SK-N-SH (cell line): ENCODE measurements at regions of chr3 and their contacts with region 1.

Region 1: DNA sequence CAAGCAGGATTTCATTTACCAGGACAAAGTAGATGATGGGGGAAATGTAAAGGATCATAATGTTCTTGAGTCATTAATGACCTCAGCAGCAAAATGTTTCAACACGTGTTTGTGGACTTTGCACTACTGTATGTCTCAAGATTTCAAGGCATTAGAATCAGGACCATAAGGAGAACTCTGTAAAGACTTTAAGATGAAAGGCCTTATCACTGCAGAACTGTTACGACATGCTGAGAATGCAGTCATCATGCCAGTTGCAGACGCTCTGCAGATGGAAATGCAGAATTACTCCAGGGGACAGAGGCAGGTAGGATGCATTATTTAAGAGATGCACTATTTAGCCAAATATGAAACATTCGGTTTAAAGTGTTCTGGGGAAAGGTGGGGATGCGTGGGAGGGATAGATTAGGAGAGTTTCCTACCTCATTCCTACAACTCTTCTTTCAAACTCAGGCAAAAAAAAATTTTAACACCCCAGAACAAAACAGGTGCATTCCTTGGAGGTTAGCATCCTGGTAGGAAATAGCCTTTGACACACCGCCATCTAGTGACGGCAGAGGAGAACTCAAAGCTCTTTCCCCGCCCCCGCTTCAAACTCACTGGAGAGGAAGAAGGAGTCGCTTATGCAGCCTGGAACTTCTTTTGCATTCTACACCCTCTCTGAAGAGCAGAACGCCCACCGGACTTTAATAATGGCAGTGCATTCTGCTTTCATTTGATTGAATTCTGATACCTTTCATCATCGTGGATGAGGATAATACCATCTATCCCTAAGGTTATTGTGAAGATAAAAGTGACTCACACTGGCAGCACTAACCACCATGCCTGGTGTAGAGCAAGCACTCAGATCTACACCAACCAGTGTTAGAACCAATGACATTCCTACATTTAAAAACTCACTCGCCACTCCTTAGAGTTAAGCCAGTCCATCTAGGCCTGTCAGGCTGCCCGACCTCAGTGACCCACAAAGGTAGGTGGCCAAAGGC is 43.1 kb upstream of the TOPAZ1 start:
- DNase-seq: peak; percentile 79
- H3K4me3 ChIP-seq: no peak overlapping the region; a peak in 1 of 4 replicates
- H3K27ac ChIP-seq: no peak overlapping the region
- H3K4me1 ChIP-seq: no peaks in the 10 kb centered on the region
- H3K27me3 ChIP-seq: peaks cover 6% of the 10 kb centered on the region; the same call in 1 of the 2 replicates
- CTCF ChIP-seq: peak; percentile 86
- EP300 ChIP-seq: no peak
- RAD21 ChIP-seq: peak; percentile 96

Region 2: DNA sequence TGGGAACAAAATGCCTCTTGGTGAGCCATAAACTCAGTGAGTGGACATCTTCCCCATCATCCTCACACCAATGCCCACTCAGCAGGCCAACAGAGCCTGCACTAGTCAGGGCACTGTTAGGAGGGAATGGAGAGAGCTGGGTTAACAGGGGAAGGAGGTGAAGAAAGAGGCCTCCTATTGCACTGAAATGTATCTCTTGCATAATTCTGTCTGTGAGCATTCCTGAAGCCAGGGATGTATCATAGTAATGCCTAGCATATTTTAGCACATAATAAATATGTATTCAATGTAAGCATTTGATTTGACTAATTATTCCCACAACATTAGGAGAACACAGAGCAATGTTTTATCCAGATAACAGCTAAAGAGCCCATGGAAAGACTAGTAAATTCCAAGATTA is 658.0 kb before region 1 on chr3:
- CTCF ChIA-PET with region 1: interaction called, 41 read pairs
- POLR2A ChIA-PET with region 1: no interaction called
- DNase-seq: no peak
- H3K4me3 ChIP-seq: no peak overlapping the region
- H3K27ac ChIP-seq: no peak overlapping the region
- H3K4me1 ChIP-seq: peaks cover 0 to 5% of the 10 kb centered on the region in 2 experiments; a peak in 1 of 4 replicates
- H3K27me3 ChIP-seq: no peaks in the 10 kb centered on the region
- CTCF ChIP-seq: no peak
- EP300 ChIP-seq: no peak
- RAD21 ChIP-seq: no peak

Region 3: DNA sequence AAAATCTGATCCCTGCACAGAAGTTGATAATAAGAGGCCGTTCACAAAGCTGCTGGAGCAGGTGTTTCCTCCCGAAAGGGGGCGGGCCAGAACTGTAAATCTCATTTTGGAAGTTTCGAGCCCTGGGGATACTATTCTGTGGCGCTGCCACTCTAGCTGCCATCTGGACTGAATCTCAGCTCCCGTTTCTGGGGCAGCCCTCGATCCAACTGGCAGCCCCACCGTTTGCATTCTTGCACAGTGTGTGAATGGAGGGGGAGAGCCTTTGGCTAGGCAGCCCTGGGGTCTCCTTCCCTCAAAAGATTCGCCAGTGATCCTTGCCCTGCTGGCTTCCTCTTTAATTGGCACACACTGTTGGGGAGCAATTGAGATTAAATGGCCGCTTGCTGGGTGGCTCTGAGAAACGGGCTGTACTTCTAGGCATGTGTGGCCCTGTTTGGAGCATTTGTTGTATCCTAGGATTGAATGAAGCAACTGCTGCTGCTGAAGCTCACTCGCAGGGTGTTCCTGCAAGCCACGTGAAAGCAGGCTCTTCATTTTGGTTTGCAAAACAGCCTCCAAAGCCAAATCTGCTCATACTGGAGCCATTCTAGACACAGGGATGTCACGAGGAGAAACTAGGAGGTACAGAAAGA is 14.1 kb before region 1 on chr3:
- CTCF ChIA-PET with region 1: interaction called, 15 read pairs
- POLR2A ChIA-PET with region 1: no interaction called
- DNase-seq: peak; percentile 23
- H3K4me3 ChIP-seq: no peak overlapping the region
- H3K27ac ChIP-seq: no peak overlapping the region
- H3K4me1 ChIP-seq: peaks cover 0 to 5% of the 10 kb centered on the region in 2 experiments; a peak in 1 of 4 replicates
- H3K27me3 ChIP-seq: no peaks in the 10 kb centered on the region; the same call in 1 of the 2 replicates
- CTCF ChIP-seq: no peak
- EP300 ChIP-seq: no peak
- RAD21 ChIP-seq: no peak; the same call in 1 of the 2 replicates

Region 4: GRCh38 chr3:44210967-44211366 is 12.4 kb after region 1 on chr3:
- CTCF ChIA-PET with region 1: interaction called, 10 read pairs
- POLR2A ChIA-PET with region 1: no interaction called
- DNase-seq: no peak
- H3K4me3 ChIP-seq: no peak overlapping the region
- H3K27ac ChIP-seq: no peak overlapping the region
- H3K4me1 ChIP-seq: no peaks in the 10 kb centered on the region
- H3K27me3 ChIP-seq: no peaks in the 10 kb centered on the region
- CTCF ChIP-seq: no peak
- EP300 ChIP-seq: no peak
- RAD21 ChIP-seq: no peak

Region 5: DNA sequence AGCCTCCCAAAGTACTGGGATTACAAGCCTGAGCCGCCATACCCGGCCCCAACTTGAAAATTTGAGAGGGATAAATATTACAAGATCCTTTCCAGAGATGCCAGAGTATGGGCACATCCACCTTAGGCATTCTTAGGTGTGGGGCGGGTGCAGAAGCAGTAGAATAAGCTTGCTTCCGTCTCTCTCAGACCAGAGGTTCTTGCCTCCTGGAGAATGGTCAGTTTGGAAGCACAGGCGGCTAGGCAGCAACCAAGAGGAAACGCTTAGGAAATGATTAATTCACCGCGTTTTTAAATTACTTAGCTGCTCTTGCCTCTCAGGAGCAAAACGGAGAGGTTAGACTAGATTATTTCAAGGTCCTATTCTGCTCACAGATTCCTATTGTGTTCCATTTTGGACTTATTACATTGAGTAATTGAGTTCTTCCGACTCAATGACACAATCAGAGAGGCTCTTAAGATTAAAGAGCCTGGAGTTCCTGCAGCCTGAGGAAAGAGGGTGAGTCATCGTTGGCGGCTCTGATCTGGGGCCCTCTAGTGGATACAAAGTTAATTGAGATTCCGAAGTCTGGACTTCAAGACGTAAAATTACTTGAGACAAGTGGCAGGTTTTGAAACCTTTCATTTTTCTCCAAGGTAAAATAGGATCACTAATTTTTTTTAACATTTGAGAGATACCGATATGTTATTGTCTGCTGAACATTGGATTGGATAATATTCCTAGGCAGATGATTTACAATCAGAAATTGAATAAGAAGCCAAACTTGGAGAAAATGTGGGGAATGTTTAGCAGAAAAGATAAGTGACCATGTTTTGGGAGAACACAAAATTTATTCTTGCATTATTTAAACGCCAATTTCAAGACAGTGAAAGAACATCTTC is 37.3 kb after region 1 on chr3:
- CTCF ChIA-PET with region 1: interaction called, 24 read pairs
- POLR2A ChIA-PET with region 1: no interaction called
- DNase-seq: peak; percentile 67
- H3K4me3 ChIP-seq: no peak overlapping the region
- H3K27ac ChIP-seq: no peak overlapping the region
- H3K4me1 ChIP-seq: no peaks in the 10 kb centered on the region; a peak in 1 of 4 replicates
- H3K27me3 ChIP-seq: no peaks in the 10 kb centered on the region
- CTCF ChIP-seq: peak; percentile 81
- EP300 ChIP-seq: no peak
- RAD21 ChIP-seq: peak; percentile 67